Activated CD4-positive, alpha-beta memory T cell treated with anti-CD3 and anti-CD28 coated beads for 36 hours (primary cell): ENCODE measurements at regions of chr13 and their contacts with region 1.

Region 1: GRCh38 chr13:91313103-91313502 is 34.4 kb upstream of the MIR17HG start:
- DNase-seq: peak; percentile 14
- H3K4me3 Mint-ChIP-seq: peak overlapping the region; percentile 5
- H3K27ac Mint-ChIP-seq: no peak overlapping the region
- H3K4me1 Mint-ChIP-seq: peaks cover 8% of the 10 kb centered on the region
- H3K27me3 Mint-ChIP-seq: peaks cover 12% of the 10 kb centered on the region

Region 2: GRCh38 chr13:91278888-91279287 is 34.2 kb before region 1 on chr13:
- CTCF ChIA-PET with region 1: no interaction called
- POLR2A ChIA-PET with region 1: no interaction called
- intact Hi-C with region 1: no loop called
- DNase-seq: no peak
- H3K4me3 Mint-ChIP-seq: no peak overlapping the region
- H3K27ac Mint-ChIP-seq: no peak overlapping the region
- H3K4me1 Mint-ChIP-seq: no peaks in the 10 kb centered on the region
- H3K27me3 Mint-ChIP-seq: peaks cover 7% of the 10 kb centered on the region

Region 3: DNA sequence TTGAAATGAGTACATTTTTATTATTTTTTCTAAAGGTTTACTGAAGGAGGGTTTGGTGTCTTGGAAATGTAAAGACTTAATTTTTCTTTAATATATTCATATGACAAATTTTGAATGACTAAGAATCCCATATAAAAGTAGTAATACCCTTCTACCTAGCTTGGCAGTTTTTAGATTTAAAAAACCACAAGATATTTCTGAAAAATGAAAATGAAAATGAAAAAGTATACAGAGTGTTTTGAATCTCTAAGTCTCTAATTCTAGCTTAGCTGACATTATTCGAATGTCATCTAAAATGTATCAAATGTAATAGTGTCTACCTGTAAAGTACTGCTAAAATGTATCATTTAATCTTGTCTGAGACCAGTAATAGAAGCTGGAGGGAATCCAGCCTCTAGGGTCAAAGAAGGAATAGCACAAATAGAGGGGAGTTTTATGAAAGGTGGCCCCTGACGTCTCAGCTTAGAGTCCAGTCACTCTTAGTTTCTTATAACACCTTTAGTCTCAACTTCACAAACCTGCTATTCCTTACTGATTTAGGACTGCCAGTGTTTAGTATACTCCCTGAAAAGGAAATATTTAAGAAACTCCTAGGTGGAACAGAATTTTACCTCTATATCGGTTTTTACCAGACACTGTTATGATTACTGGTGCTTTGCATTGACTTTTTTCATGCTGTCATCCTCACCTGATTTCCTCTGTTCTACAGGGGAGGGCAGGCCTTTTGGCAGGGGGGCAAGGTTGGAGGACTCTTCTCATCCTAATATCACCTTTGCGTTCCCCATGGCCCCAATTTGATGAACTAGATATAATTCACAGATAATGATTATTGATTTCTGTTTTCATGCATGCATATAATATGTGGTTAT is 18.2 kb after region 1 on chr13:
- CTCF ChIA-PET with region 1: interaction called, 25 read pairs
- POLR2A ChIA-PET with region 1: no interaction called
- intact Hi-C with region 1: loop called (anchors 2 kb)
- DNase-seq: no peak
- H3K4me3 Mint-ChIP-seq: peak overlapping the region; percentile 43
- H3K27ac Mint-ChIP-seq: peak overlapping the region; percentile 67
- H3K4me1 Mint-ChIP-seq: peaks cover 18% of the 10 kb centered on the region
- H3K27me3 Mint-ChIP-seq: peaks cover 2% of the 10 kb centered on the region

Region 4: DNA sequence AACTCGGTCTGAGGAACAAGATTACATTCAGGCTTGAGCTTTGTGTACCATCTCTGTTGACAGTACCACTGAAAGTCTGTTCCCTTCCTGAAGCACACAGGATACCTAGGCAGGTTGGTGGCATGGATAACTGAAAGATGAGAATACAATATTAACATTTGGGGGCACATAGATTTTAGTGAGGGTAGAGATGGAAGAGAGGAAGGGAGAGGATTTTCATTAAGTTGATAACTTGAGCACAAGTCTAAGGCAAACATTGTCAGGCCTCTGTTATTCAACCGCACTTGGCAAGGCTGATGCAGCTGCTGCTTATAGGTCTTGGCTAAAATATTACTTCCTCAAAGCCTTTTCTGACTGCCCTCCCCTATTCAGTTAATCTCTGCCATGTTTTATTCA is 45.3 kb after region 1 on chr13:
- CTCF ChIA-PET with region 1: interaction called, 15 read pairs
- POLR2A ChIA-PET with region 1: interaction called, 3 read pairs
- intact Hi-C with region 1: no loop called
- DNase-seq: no peak
- H3K4me3 Mint-ChIP-seq: no peak overlapping the region
- H3K27ac Mint-ChIP-seq: peak overlapping the region; percentile 50
- H3K4me1 Mint-ChIP-seq: peaks cover 14% of the 10 kb centered on the region
- H3K27me3 Mint-ChIP-seq: no peaks in the 10 kb centered on the region

Region 5: DNA sequence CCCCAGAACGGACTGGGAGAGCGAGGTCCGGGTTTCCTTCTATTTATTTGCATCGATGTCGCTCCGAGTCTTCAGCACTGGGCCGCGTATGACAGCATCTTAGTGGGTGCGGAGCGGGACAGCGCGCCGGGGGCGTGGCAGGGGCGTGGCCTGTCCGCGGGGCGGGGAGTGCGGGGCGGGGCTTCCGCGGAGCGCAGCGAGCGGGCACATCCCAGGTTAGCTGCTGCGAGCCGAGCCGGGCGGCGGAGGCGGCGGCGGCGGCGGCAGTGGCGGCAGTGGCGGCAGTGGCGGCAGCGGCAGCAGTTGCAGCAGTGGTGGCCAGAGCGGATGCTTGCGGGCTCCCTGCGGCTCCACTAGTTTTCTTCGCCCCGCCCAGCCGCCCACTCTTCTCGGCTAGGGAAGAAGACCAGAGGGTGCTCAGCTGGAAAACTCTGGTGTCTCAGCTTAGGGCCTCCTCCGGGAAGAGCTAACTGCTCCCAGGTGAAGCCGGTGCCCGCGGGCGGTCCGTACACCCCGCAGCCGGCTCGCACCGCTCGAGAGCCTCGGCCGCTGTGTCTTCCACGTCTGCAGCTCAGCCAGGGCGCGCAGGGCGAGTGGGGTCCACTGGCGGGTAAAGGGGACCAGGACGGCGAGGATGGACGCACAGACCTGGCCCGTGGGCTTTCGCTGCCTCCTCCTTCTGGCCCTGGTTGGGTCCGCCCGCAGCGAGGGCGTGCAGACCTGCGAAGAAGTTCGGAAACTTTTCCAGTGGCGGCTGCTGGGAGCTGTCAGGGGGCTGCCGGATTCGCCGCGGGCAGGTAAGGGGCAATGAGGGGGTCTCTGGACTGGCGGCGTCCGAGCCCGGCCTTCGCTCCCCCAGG is 85.5 kb after region 1 on chr13 and contains the start of gene GPC5:
- CTCF ChIA-PET with region 1: interaction called, 4 read pairs
- POLR2A ChIA-PET with region 1: no interaction called
- intact Hi-C with region 1: loop called (anchors 2 kb)
- DNase-seq: peak; percentile 91
- H3K4me3 Mint-ChIP-seq: peak within 1 kb of the TSS; percentile 69
- H3K27ac Mint-ChIP-seq: peak within 1 kb of the TSS; percentile 21
- H3K4me1 Mint-ChIP-seq: peaks cover 9% of the 10 kb centered on the region
- H3K27me3 Mint-ChIP-seq: peaks cover 44% of the 10 kb centered on the region
- total RNA-seq, gene GPC5: 0.17 to 0.29 TPM

Region 6: DNA sequence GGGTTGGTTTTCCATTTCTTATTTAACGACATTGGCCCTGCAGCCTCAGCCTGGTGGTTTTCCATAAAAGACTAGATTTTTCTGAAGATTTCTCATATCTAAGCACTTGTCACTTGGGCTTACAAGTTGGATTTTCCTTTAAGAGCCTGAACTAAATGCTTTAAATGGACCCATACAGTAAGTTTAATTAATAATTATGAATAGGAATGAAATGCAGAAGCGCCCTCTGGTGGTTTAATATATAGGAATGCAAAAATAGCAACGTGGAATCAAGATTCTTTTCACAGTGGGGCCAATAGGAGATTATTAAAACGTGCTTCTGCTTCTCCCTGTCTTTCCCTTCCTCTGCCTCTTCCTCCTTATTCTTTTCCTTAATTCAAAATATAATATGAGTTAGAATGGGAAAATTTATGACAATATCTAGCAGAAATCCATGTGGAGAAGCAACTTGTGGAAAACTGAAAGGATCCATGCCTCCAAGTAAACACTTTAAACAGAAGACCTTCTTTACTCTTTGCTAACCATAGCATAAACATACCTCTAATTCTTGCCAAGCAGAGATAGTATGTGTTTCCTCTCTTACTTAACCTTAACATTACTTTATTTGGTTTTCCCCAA is 409.3 kb after region 1 on chr13:
- CTCF ChIA-PET with region 1: interaction called, 8 read pairs
- POLR2A ChIA-PET with region 1: no interaction called
- intact Hi-C with region 1: loop called (anchors 2 kb)
- DNase-seq: no peak
- H3K4me3 Mint-ChIP-seq: no peak overlapping the region
- H3K27ac Mint-ChIP-seq: no peak overlapping the region
- H3K4me1 Mint-ChIP-seq: no peaks in the 10 kb centered on the region
- H3K27me3 Mint-ChIP-seq: no peaks in the 10 kb centered on the region